Aorta (tissue), 5 donors: ENCODE measurements at regions of chr11 and their contacts with region 1.

Region 1: DNA sequence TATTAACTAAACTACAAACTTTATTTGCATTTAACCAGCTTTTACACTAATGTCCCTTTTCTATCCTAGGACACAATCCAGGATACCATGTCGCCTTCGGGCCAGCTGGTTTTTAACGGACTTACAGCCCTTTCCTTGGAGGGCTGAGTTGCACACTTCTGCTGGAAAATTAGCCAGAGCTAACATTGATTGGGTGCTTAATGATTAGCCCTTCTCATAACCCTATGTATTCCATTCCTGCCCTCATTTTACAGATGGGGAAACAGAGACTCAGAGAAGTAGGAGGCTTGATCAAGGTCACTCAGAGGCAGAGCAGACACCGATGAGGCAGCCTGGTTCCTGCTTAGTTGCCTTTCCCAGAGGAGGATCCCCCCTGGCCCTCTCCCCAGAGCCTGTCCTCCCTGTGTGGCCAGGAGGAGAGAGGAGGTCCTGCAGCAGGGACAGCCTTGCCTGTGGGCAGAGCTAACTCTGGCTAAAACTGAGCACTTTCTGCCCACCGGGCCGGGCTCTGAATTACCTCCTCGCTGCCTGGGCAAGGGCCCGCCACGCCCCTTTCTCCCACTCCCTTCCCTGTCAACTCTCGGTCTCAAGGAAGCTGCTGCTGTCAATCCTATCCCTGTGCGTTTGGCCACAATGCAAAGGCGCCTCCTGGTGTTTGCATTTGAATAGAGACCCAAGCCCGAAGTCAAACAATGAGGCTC is 59.6 kb upstream of the PAX6 start:
- DNase-seq: peak in 1 of 2 donors; percentile 43
- ATAC-seq: peak; percentile 59
- H3K4me3 ChIP-seq: no peak overlapping the region
- H3K27ac ChIP-seq: no peak overlapping the region
- H3K4me1 ChIP-seq: no peaks in the 10 kb centered on the region
- H3K27me3 ChIP-seq: peaks cover 0 to 2% of the 10 kb centered on the region in 2 donors

Region 2: DNA sequence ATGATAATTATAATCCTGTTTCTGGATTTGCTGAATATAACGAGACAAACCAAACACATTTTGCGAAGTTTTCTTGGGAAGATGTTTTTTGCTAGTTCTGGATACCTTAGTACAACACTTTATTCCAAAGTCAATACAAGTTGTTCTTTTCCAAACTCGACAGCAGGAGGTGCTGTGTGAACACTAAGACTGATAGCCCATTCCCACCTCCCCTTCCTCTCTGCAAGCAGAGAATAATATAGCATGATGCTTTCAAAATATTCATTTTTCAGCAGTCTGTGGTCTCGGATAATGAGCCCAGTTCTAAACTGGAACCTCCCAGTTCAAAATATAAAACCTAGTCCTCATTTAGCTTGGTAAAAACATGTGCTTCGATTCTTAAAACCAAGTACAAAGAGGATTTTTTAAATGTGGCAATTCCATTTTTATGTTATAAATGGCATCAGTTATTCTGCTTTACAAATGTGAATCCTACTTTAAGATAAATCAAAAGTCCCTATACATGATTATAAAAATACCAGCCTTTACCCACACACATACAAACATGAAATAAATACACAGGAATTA is 630.3 kb before region 1 on chr11:
- intact Hi-C with region 1: loop called in 1 of 2 experiments (anchors 5 kb)
- DNase-seq: no peak
- ATAC-seq: no peak
- H3K4me3 ChIP-seq: no peak overlapping the region
- H3K27ac ChIP-seq: no peak overlapping the region
- H3K4me1 ChIP-seq: no peaks in the 10 kb centered on the region
- H3K27me3 ChIP-seq: no peaks in the 10 kb centered on the region

Region 3: GRCh38 chr11:31492320-31492913 is 378.3 kb before region 1 on chr11:
- intact Hi-C with region 1: loop called in 1 of 2 experiments (anchors 10 kb)
- DNase-seq: no peak
- ATAC-seq: no peak
- H3K4me3 ChIP-seq: no peak overlapping the region
- H3K27ac ChIP-seq: no peak overlapping the region
- H3K4me1 ChIP-seq: no peaks in the 10 kb centered on the region
- H3K27me3 ChIP-seq: no peaks in the 10 kb centered on the region